Activated T-helper 2 cell treated with anti-CD3 and anti-CD28 coated beads, Interferon-gamma antibody, Interleukin-2, Interleukin-4, amounts not matched to agents 10 μg/mL and 5 μg/mL and 100 μg/mL, durations not matched to agents 14 hours and 24 hours and 36 hours (primary cell): ENCODE measurements at regions of chr17 and their contacts with region 1.

Region 1: GRCh38 chr17:44186307-44187130 is at the start of gene TMUB2:
- DNase-seq: peak; percentile 99
- H3K4me3 Mint-ChIP-seq: peak within 1 kb of the TSS; percentile 98
- H3K27ac Mint-ChIP-seq: peak within 1 kb of the TSS; percentile 97
- H3K4me1 Mint-ChIP-seq: peaks cover 31% of the 10 kb centered on the region
- H3K27me3 Mint-ChIP-seq: no peaks in the 10 kb centered on the region
- total RNA-seq, gene TMUB2: 20.4 and 20.9 TPM in 2 replicates

Region 2: GRCh38 chr17:44141717-44142285 is 44.7 kb before region 1 on chr17 and contains the start of gene HROB:
- intact Hi-C with region 1: loop called (anchors 1 kb)
- DNase-seq: peak; percentile 97
- H3K4me3 Mint-ChIP-seq: peak within 1 kb of the TSS; percentile 91
- H3K27ac Mint-ChIP-seq: peak within 1 kb of the TSS; percentile 94
- H3K4me1 Mint-ChIP-seq: peaks cover 15% of the 10 kb centered on the region
- H3K27me3 Mint-ChIP-seq: no peaks in the 10 kb centered on the region
- total RNA-seq, gene HROB: 20.7 and 24.1 TPM in 2 replicates

Region 3: DNA sequence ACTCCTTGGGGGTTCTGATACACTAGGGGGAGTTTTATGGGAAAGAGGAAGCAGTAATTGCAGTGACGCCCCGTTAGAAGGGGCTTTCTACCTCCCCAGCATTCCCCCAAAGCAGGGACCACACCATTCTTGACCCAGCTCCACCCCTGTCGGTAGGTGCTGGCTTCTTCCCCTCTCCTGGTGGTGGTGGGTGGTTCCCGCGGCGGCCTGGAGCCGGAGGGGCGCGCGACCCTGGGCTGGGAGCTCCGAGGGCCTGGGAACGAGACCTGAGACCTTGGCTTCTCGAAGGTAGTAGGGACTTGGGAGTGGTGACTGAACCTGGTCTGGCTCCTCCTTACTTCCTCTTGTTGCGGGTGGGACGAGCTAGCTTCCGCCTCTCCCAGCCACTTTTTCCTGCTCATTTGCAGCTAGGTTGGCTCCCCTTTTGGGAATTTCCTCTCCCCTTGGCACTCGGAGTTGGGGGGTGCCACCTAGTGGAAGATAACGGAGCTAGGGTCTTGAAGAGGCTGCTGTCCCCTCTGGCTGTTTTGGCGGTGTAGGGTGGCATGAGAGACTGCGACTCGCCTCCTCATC is 159.0 kb after region 1 on chr17:
- intact Hi-C with region 1: no loop called
- DNase-seq: no peak
- H3K4me3 Mint-ChIP-seq: peak overlapping the region; percentile 94
- H3K27ac Mint-ChIP-seq: peak overlapping the region; percentile 56
- H3K4me1 Mint-ChIP-seq: peaks cover 12% of the 10 kb centered on the region
- H3K27me3 Mint-ChIP-seq: peaks cover 12% of the 10 kb centered on the region

Region 4: DNA sequence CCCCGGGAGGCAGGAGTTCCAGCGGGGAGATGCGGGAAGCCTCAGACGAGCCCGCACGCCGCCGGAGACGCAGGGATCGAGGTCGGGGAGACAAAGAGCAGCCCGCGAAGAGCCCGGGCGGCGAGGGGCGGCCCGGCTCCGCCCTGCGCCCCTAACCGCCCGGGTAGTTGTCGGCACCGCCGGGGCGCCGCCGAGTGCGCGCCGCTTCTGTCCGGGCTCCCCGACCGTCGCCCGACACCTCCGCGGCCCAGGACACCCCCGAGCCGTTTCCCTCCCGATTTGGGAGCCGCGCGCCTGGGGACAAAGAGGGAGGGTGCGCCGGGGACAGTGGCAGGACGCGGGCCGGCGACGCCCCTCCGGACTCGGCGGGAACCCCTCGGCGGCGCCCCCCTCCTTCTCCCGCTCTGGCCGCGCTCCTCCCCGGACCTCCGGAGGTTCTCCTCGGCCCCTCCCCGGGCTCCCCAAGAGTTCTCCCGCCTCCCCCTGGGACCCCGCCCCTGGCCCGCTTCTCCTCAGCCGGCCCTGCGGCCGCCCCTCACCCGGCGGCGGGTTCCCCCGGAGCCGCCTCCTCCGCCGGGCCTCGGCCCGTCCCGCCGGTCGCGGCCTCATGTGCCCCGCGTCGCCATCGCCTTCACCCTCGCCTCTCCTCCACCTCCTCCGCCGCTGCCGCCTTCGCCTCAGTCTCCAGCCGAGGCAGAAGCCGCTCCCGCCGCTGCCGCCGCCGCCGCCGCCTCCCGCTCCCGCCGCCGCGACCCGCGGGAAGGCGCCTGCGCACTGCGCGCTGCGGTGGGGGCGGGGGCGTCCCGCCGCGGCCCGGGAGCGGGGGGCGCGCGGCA is 643.2 kb after region 1 on chr17 and contains the start of gene GJC1:
- intact Hi-C with region 1: no loop called
- DNase-seq: no peak
- H3K4me3 Mint-ChIP-seq: peak within 1 kb of the TSS; percentile 75
- H3K27ac Mint-ChIP-seq: peak within 1 kb of the TSS; percentile 28
- H3K4me1 Mint-ChIP-seq: peaks cover 9% of the 10 kb centered on the region
- H3K27me3 Mint-ChIP-seq: peaks cover 50% of the 10 kb centered on the region
- total RNA-seq, gene GJC1: 8.2 and 9.4 TPM in 2 replicates